ENCODE measurements at regions of chr12 and their contacts with region 1.

Region 1: DNA sequence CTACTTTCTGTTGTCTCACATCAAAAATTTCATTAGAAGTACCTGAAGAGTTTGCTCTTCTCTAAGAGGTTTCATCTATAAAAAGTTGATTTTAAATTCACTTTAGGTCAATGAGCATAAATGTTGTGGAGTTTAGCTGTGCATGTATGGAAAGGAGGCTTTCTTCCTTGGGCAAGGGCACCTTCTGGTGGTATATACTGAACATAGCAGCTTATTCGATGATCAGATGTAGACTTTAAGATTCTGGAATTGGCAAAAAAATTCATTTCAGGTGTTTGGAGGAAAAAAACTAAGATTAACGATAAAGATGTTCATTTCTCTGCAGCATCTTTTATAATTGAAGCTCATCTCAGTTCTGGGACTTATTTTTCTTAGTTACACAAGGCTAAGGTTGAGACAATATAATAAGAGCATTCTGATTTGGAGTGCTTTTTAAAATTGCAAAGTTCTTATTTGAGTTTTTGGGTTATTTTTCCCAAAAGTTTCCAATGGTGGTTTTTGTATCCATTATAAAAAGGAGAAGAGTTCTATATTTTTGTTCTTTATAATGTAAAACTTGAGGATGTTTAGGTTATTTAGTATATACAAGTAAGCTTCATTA is 46.8 kb downstream of the TMEM117 start:
- DNase-seq: peak; percentile 75
- ATAC-seq: peak; percentile 82
- H3K4me3 ChIP-seq: no peak overlapping the region
- H3K27ac ChIP-seq: no peak overlapping the region
- H3K4me1 ChIP-seq: no peaks in the 10 kb centered on the region
- H3K27me3 ChIP-seq: no peaks in the 10 kb centered on the region
- CTCF ChIP-seq: peak; percentile 91

Region 2: DNA sequence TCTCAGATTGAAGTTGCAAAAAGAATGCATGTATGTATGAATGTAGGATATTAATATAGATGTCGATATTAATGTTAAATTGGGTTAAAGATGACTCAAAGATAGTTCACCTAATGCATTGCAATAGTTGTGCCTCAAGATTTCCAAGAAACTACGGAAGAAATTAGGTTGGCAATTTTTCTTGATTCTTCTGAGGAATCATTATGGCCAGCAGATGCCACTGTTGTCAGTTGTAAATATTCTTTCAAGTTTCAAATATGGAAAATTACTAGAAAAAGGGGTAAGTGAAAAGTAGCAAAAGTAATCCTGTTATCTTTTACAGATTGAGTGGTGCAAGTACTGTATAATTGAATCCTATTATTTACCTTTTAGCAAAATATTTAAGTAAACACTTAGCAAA is 532.8 kb before region 1 on chr12:
- CTCF ChIA-PET with region 1: no interaction called
- POLR2A ChIA-PET with region 1: no interaction called
- intact Hi-C with region 1: loop called (anchors 1 kb)
- DNase-seq: peak; percentile 62
- ATAC-seq: peak; percentile 33; the same call in 1 of the 2 replicates
- H3K4me3 ChIP-seq: no peak overlapping the region
- H3K27ac ChIP-seq: no peak overlapping the region
- H3K4me1 ChIP-seq: no peaks in the 10 kb centered on the region
- H3K27me3 ChIP-seq: no peaks in the 10 kb centered on the region
- CTCF ChIP-seq: peak; percentile 80

Region 3: GRCh38 chr12:43501703-43502102 is 381.0 kb before region 1 on chr12:
- CTCF ChIA-PET with region 1: no interaction called
- POLR2A ChIA-PET with region 1: no interaction called
- intact Hi-C with region 1: loop called (anchors 5 kb)
- DNase-seq: peak; percentile 47
- ATAC-seq: no peak
- H3K4me3 ChIP-seq: no peak overlapping the region
- H3K27ac ChIP-seq: no peak overlapping the region
- H3K4me1 ChIP-seq: no peaks in the 10 kb centered on the region
- H3K27me3 ChIP-seq: no peaks in the 10 kb centered on the region; the same call in 1 of the 2 replicates
- CTCF ChIP-seq: peak; percentile 85

Region 4: DNA sequence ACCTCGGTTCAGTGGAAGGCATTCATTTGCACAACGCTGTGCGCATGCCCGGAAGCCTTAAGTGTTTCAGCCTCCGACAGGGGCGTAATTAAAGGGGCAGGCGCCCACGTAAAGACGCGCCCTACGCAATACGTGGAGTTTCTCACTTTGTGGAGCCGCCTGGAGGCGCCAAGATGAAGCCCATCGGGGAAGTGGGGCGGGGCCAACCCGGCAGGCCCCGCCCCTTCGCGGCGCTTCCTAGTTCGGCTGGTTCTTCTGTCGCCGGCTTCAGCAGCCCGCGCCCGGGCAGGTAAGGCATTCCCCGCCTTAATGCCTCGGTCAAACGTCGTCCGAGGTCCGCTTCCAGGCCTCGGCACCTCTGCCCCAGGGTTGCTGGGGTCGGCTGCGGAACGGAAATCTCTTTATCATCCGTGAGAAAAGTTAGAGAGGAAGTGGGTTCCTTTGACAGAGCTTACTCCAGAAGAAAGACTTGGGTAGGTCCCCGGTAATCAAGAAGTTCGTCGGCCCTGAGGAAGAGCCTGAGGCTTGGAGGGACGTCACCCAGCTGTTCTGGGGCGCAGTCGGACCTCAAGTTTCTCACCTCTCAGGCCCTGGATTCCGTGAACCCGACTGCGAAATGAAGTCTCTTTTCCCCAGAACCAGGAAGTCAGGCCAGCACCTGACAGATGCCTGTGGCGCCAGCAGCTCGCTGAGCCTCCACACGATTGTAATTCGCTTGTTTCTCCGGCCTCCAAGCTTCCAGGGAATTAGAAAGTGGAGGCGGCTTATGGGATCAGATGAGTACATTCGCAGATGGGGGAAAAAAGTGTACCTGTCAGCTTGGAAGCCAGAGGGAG is 123.7 kb before region 1 on chr12 and contains the starts of genes IRAK4 and PUS7L:
- CTCF ChIA-PET with region 1: interaction called, 3 read pairs
- POLR2A ChIA-PET with region 1: no interaction called
- intact Hi-C with region 1: loop called (anchors 5 kb)
- DNase-seq: peak; percentile 99
- ATAC-seq: peak; percentile 94
- H3K4me3 ChIP-seq: peak within 1 kb of the TSS; percentile 93
- H3K27ac ChIP-seq: peak within 1 kb of the TSS; percentile 60
- H3K4me1 ChIP-seq: peaks cover 35% of the 10 kb centered on the region
- H3K27me3 ChIP-seq: no peaks in the 10 kb centered on the region
- CTCF ChIP-seq: peak; percentile 40
- total RNA-seq, gene IRAK4: 5.6 and 8.9 TPM in 2 replicates
- total RNA-seq, gene PUS7L: 9.1 and 14.6 TPM in 2 replicates

Region 5: DNA sequence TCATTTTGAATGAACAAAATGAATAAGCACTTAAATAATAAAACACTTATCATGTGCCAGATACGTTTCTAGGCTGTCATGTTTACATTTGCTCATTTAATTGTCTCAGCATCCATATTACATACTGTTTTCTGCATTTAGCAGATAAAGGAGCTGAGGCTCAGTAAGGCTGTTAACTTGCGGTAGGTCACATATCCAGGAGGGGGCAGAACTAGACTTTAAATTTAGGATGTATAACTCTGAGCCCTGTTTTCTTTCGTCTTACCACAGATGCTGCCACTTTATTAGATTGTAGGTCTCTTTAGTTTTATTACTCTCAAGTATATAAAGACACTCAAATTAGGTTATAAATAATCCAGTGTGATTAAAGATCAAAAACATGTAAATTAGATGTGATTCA is 106.2 kb before region 1 on chr12:
- CTCF ChIA-PET with region 1: interaction called, 21 read pairs
- POLR2A ChIA-PET with region 1: no interaction called
- intact Hi-C with region 1: loop called (anchors 1 kb)
- DNase-seq: peak; percentile 76
- ATAC-seq: peak; percentile 96
- H3K4me3 ChIP-seq: no peak overlapping the region
- H3K27ac ChIP-seq: no peak overlapping the region
- H3K4me1 ChIP-seq: no peaks in the 10 kb centered on the region
- H3K27me3 ChIP-seq: no peaks in the 10 kb centered on the region
- CTCF ChIP-seq: peak; percentile 86

Region 6: GRCh38 chr12:43795716-43796288 is 86.9 kb before region 1 on chr12:
- CTCF ChIA-PET with region 1: no interaction called
- POLR2A ChIA-PET with region 1: no interaction called
- intact Hi-C with region 1: loop called (anchors 5 kb)
- DNase-seq: peak; percentile 97
- ATAC-seq: peak; percentile 67
- H3K4me3 ChIP-seq: peak overlapping the region; percentile 8; the same call in 1 of the 2 replicates
- H3K27ac ChIP-seq: peak overlapping the region; percentile 86
- H3K4me1 ChIP-seq: peaks cover 50% of the 10 kb centered on the region
- H3K27me3 ChIP-seq: no peaks in the 10 kb centered on the region
- CTCF ChIP-seq: no peak

Region 7: GRCh38 chr12:43835656-43836474 is 46.8 kb before region 1 on chr12 and contains the start of gene TMEM117:
- CTCF ChIA-PET with region 1: no interaction called
- POLR2A ChIA-PET with region 1: no interaction called
- intact Hi-C with region 1: loop called (anchors 5 kb)
- DNase-seq: peak; percentile 52
- ATAC-seq: peak; percentile 76
- H3K4me3 ChIP-seq: peak within 1 kb of the TSS; percentile 83
- H3K27ac ChIP-seq: peak within 1 kb of the TSS; percentile 41
- H3K4me1 ChIP-seq: peaks cover 8% of the 10 kb centered on the region; the same call in 1 of the 2 replicates
- H3K27me3 ChIP-seq: no peaks in the 10 kb centered on the region
- CTCF ChIP-seq: no peak
- total RNA-seq, gene TMEM117: 7.9 and 9.0 TPM in 2 replicates